PC-9 (cell line): ENCODE measurements at regions of chr12 and their contacts with region 1.

Region 1: DNA sequence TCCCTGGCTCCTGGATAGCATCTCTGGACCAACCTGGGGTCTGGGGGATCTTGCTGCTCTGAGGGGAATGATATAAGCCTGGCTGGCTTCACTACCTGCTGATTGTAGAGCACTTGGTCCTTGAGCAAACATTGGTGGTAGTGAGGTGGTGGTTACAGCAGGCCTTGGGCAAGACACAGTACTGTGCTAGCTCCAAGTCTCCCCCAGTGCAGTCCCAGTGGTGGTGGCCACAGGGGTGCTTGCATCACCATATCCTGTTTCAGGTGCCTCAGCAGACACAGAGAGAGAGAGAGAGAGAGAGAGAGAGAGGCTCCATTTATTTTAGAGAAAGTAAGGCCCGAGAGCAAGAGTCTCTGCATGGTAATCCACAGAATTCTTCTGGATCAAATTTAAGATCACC is 186.3 kb downstream of the MYRFL start:
- DNase-seq: no peak
- H3K4me3 ChIP-seq: no peak overlapping the region
- H3K27ac ChIP-seq: no peak overlapping the region
- H3K4me1 ChIP-seq: peaks cover 20% of the 10 kb centered on the region
- H3K27me3 ChIP-seq: no peaks in the 10 kb centered on the region
- CTCF ChIP-seq: no peak

Region 2: GRCh38 chr12:69470189-69471075 is 540.9 kb before region 1 on chr12 and contains the start of gene FRS2:
- CTCF ChIA-PET with region 1: no interaction called
- POLR2A ChIA-PET with region 1: no interaction called
- intact Hi-C with region 1: no loop called
- DNase-seq: peak; percentile 81 to 86
- H3K4me3 ChIP-seq: peak within 1 kb of the TSS; percentile 72
- H3K27ac ChIP-seq: peak within 1 kb of the TSS; percentile 54
- H3K4me1 ChIP-seq: peaks cover 26% of the 10 kb centered on the region
- H3K27me3 ChIP-seq: no peaks in the 10 kb centered on the region
- CTCF ChIP-seq: peak; percentile 47; the same call in 1 of the 2 replicates
- total RNA-seq, gene FRS2: 15.6 and 23.3 TPM in 2 replicates

Region 3: GRCh38 chr12:70032076-70032475 is 20.7 kb after region 1 on chr12:
- CTCF ChIA-PET with region 1: no interaction called
- POLR2A ChIA-PET with region 1: interaction called, 12 read pairs
- intact Hi-C with region 1: no loop called
- DNase-seq: no peak
- H3K4me3 ChIP-seq: no peak overlapping the region
- H3K27ac ChIP-seq: no peak overlapping the region
- H3K4me1 ChIP-seq: no peaks in the 10 kb centered on the region
- H3K27me3 ChIP-seq: no peaks in the 10 kb centered on the region
- CTCF ChIP-seq: no peak